ENCODE measurements at regions of chr7 and their contacts with region 1.

Region 1: GRCh38 chr7:94657771-94658693 is 2.1 kb upstream of the SGCE start:
- DNase-seq: peak; percentile 50
- H3K4me3 ChIP-seq: peak overlapping the region; percentile 75
- CTCF ChIP-seq: no peak

Region 2: GRCh38 chr7:94109556-94109955 is 548.5 kb before region 1 on chr7:
- CTCF ChIA-PET with region 1: no interaction called
- POLR2A ChIA-PET with region 1: no interaction called
- DNase-seq: no peak
- H3K4me3 ChIP-seq: no peak overlapping the region
- CTCF ChIP-seq: no peak

Region 3: DNA sequence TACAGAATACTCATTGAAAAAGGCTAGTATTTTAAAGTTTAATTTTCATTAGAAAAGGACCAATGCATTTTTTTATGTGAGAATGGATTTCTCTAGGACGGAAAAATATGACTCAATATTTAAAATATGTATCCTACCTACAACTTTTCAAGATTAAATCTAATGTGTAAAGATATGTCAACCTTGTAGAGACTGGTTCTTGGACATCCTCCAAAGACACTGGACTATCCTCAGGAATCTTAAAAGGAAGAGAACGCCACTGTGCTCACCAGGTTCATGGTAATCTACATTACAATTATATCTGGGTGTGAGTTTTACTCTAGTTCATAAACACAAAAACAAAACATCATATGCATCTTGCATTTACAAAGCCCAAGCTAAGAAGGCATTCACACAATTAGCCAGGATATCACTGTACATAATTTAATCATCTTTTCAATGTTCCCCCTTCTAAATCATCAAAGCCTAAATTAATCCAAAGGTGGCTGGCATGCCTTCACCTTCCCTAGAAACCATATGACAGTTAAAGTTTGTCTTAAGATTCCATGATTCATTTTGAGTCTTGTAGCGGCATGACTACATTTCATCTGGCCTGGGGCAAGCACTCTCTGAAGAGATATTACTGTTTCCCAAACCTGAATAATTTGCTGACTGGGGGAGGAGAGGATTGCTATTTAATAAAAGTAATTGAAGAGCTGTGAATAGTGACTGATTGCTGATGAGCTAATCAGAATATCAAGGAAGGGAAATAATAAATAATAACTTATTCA is 14.1 kb before region 1 on chr7:
- CTCF ChIA-PET with region 1: interaction called, 21 read pairs
- POLR2A ChIA-PET with region 1: no interaction called
- DNase-seq: no peak
- H3K4me3 ChIP-seq: no peak overlapping the region
- CTCF ChIP-seq: no peak

Region 4: DNA sequence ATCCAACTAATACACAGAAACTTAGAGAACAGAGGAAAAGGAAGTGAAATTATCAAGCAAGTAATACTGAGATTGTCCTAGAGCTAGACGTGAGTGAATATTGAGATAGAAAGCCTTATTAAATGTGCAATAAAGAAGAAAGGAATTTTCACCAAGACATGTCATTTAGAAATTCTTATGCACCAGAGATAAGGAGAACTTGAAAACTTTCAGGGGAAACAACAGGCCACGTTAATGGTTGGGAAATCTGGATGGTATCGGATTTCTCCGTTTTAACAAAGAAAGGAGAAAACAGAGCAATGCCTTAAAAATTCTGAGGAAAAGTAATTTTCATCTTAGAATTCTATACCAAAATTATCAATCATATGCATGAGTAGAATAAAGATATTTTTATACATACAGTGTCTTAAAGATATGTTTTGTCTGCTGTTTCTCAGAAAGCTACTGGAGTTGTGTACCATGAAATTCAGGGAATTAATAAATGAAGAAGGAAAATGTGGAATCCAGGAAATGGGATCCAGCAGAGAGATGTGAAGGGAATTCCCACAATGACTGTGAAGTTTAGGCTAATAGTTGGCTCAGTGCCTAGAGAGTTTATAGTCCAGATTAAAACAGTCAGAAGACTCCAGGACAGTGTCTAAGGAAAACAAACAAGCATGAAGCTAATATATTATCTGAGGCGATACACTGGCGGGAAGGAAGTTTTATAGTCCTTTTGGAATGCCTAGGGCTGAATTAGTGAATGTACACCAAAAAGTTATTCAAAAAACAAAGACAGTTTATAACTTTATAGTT is 408.9 kb after region 1 on chr7:
- CTCF ChIA-PET with region 1: no interaction called
- POLR2A ChIA-PET with region 1: no interaction called
- DNase-seq: no peak
- H3K4me3 ChIP-seq: no peak overlapping the region
- CTCF ChIP-seq: no peak

Measured in AG04449 (cell line).